Activated CD4-positive, alpha-beta T cell treated with anti-CD3 and anti-CD28 coated beads for 36 hours (primary cell): ENCODE measurements at regions of chr4 and their contacts with region 1.

Region 1: DNA sequence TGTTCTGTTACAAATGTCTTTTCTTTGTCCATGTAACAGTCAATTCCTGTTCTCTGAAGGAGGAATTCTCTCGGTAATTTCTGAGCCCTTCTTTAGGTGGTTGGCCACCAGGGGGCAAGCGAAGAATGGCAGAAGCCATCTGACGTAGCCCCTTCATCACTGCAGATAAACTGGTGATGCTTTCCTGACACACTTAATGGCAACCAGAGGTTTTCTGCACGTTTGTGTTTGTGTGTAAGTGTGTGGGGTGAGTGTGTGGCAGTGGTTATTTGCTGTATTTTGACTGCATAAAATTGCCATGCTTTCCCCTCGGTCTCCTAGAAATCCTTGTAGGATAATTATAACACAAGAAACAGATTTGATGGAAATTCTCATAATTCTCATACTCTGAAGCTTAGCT is 64.8 kb upstream of the STOX2 start:
- DNase-seq: peak; percentile 83
- ATAC-seq: peak; percentile 47
- H3K4me3 Mint-ChIP-seq: no peak overlapping the region
- H3K27ac Mint-ChIP-seq: no peak overlapping the region
- H3K4me1 Mint-ChIP-seq: no peaks in the 10 kb centered on the region
- H3K27me3 Mint-ChIP-seq: peaks cover 18% of the 10 kb centered on the region

Region 2: GRCh38 chr4:183915976-183916375 is 75.7 kb after region 1 on chr4:
- CTCF ChIA-PET with region 1: no interaction called
- POLR2A ChIA-PET with region 1: no interaction called
- intact Hi-C with region 1: no loop called
- DNase-seq: no peak
- ATAC-seq: no peak
- H3K4me3 Mint-ChIP-seq: no peak overlapping the region
- H3K27ac Mint-ChIP-seq: no peak overlapping the region
- H3K4me1 Mint-ChIP-seq: no peaks in the 10 kb centered on the region
- H3K27me3 Mint-ChIP-seq: peaks cover 4% of the 10 kb centered on the region

Region 3: GRCh38 chr4:184100297-184100885 is 260.1 kb after region 1 on chr4:
- CTCF ChIA-PET with region 1: interaction called, 22 read pairs
- POLR2A ChIA-PET with region 1: no interaction called
- intact Hi-C with region 1: loop called (anchors 1 kb)
- DNase-seq: peak; percentile 74
- ATAC-seq: peak; percentile 75
- H3K4me3 Mint-ChIP-seq: no peak overlapping the region
- H3K27ac Mint-ChIP-seq: no peak overlapping the region
- H3K4me1 Mint-ChIP-seq: peaks cover 3% of the 10 kb centered on the region
- H3K27me3 Mint-ChIP-seq: peaks cover 15% of the 10 kb centered on the region

Region 4: DNA sequence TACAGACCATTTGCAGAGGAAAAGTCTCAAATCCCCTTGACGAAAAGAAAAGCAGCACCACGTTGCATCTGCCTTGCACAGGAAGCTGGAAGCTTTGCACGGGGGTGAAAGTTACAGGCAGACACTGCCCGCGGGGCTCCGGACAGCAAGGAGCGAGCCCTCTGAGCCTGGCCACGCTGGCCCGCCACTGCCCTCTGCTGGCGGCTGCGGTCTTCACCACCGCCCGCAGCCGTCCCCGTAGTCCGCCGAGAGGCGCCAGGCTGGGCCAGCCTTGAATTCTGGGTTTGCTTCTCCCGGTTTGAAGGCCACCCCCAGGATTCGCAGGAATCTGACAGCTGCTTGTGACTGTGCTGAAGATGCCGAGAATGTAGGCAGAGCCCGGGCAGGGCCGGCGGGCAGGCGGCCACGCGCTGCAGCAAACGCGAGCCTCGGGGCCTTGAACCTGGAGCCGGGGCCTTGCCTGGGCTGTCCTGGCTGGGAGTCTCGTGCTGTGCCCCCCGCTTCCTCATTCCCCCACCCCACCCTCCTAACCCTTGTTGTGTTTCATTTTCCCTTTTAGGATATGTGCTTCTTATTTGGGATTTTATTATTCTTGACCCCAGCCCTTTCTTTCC is 328.2 kb after region 1 on chr4:
- CTCF ChIA-PET with region 1: interaction called, 4 read pairs
- POLR2A ChIA-PET with region 1: no interaction called
- intact Hi-C with region 1: loop called (anchors 1 kb)
- DNase-seq: peak; percentile 79
- ATAC-seq: peak; percentile 91
- H3K4me3 Mint-ChIP-seq: no peak overlapping the region
- H3K27ac Mint-ChIP-seq: no peak overlapping the region
- H3K4me1 Mint-ChIP-seq: peaks cover 2% of the 10 kb centered on the region
- H3K27me3 Mint-ChIP-seq: peaks cover 58% of the 10 kb centered on the region

Region 5: GRCh38 chr4:184288451-184289178 is 448.3 kb after region 1 on chr4:
- CTCF ChIA-PET with region 1: no interaction called
- POLR2A ChIA-PET with region 1: no interaction called
- intact Hi-C with region 1: no loop called
- DNase-seq: peak; percentile 70
- ATAC-seq: peak; percentile 85
- H3K4me3 Mint-ChIP-seq: peak overlapping the region; percentile 50
- H3K27ac Mint-ChIP-seq: peak overlapping the region; percentile 73
- H3K4me1 Mint-ChIP-seq: peaks cover 47% of the 10 kb centered on the region
- H3K27me3 Mint-ChIP-seq: peaks cover 4% of the 10 kb centered on the region

Region 6: GRCh38 chr4:184838249-184839074 is 998.2 kb after region 1 on chr4:
- CTCF ChIA-PET with region 1: no interaction called
- POLR2A ChIA-PET with region 1: no interaction called
- intact Hi-C with region 1: no loop called
- DNase-seq: no peak
- ATAC-seq: no peak
- H3K4me3 Mint-ChIP-seq: no peak overlapping the region
- H3K27ac Mint-ChIP-seq: no peak overlapping the region
- H3K4me1 Mint-ChIP-seq: peaks cover 2% of the 10 kb centered on the region
- H3K27me3 Mint-ChIP-seq: peaks cover 8% of the 10 kb centered on the region